Transverse colon (tissue), 4 donors: ENCODE measurements at regions of chr11 and their contacts with region 1.

Region 1: DNA sequence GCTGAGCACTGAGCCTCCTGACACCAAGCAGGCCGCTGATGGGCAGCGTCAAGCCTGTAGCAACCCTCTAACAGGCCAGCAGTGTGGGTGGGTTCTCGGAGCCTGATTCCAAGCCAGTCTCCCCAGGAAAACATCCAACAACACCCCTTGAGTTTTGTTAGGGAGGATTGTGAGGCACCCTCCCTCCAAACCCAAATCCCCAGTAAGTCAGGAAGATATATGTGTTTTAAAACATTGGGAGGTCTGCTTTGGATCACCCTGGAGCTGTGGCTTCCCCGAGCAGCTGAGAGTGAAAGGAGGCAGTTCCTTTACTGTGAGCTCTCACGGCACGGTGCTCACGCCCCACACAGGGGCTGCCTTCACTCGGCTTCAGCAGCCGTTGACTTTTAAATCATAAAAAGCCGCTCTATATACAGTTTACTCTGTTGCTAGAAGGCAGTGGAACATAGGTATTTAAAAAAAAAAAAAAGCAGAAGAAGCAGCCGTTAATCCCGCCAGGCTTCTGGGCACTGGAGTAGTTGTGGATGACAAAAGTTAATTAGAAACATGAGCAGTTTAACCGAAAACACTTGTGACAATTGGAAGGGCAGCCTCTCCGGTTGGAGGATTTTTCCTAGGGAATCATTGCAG is 218.6 kb downstream of the NAV2 start:
- DNase-seq: no peak
- H3K4me3 ChIP-seq: no peak overlapping the region
- H3K27ac ChIP-seq: peak overlapping the region in 3 of 4 donors; percentile 55 to 78 (median 71)
- H3K4me1 ChIP-seq: peaks cover 0 to 10% (median 7%) of the 10 kb centered on the region in 4 donors
- H3K27me3 ChIP-seq: no peaks in the 10 kb centered on the region
- CTCF ChIP-seq: no peak
- EP300 ChIP-seq: no peak
- POLR2A ChIP-seq: no peak

Region 2: GRCh38 chr11:20110908-20111669 is 179.8 kb after region 1 on chr11:
- in situ Hi-C with region 1: no loop called
- intact Hi-C with region 1: loop called (anchors 2 kb)
- DNase-seq: peak; percentile 55
- H3K4me3 ChIP-seq: no peak overlapping the region
- H3K27ac ChIP-seq: peak overlapping the region; percentile 8 to 86 (median 78)
- H3K4me1 ChIP-seq: peaks cover 14 to 25% (median 18%) of the 10 kb centered on the region in 4 donors
- H3K27me3 ChIP-seq: no peaks in the 10 kb centered on the region
- CTCF ChIP-seq: peak; percentile 80 to 89 (median 84)
- EP300 ChIP-seq: peak; percentile 72
- POLR2A ChIP-seq: no peak